PC-3 (cell line): ENCODE measurements at regions of chr14 and their contacts with region 1.

Region 1: GRCh38 chr14:77000340-77001270 is 27.9 kb downstream of the IRF2BPL start:
- DNase-seq: no peak
- ATAC-seq: peak; percentile 35
- H3K4me3 ChIP-seq: no peak overlapping the region
- H3K27ac ChIP-seq: no peak overlapping the region
- H3K4me1 ChIP-seq: peaks cover 34% of the 10 kb centered on the region
- H3K27me3 ChIP-seq: no peaks in the 10 kb centered on the region
- CTCF ChIP-seq: no peak

Region 2: GRCh38 chr14:76962303-76962660 is 38.3 kb before region 1 on chr14:
- CTCF ChIA-PET with region 1: no interaction called
- POLR2A ChIA-PET with region 1: no interaction called
- intact Hi-C with region 1: loop called (anchors 5 kb)
- DNase-seq: no peak
- ATAC-seq: peak; percentile 4
- H3K4me3 ChIP-seq: peak overlapping the region; percentile 59
- H3K27ac ChIP-seq: peak overlapping the region; percentile 86
- H3K4me1 ChIP-seq: peaks cover 49% of the 10 kb centered on the region
- H3K27me3 ChIP-seq: no peaks in the 10 kb centered on the region
- CTCF ChIP-seq: no peak

Region 3: GRCh38 chr14:77023001-77023996 is 22.7 kb after region 1 on chr14:
- CTCF ChIA-PET with region 1: no interaction called
- POLR2A ChIA-PET with region 1: no interaction called
- intact Hi-C with region 1: loop called (anchors 1 kb)
- DNase-seq: peak; percentile 61
- ATAC-seq: peak; percentile 10
- H3K4me3 ChIP-seq: peak overlapping the region; percentile 99
- H3K27ac ChIP-seq: peak overlapping the region; percentile 91
- H3K4me1 ChIP-seq: peaks cover 25% of the 10 kb centered on the region
- H3K27me3 ChIP-seq: no peaks in the 10 kb centered on the region
- CTCF ChIP-seq: peak; percentile 35; the same call in 1 of the 2 replicates

Region 4: GRCh38 chr14:77186911-77187648 is 186.5 kb after region 1 on chr14:
- CTCF ChIA-PET with region 1: no interaction called
- POLR2A ChIA-PET with region 1: no interaction called
- intact Hi-C with region 1: no loop called
- DNase-seq: peak; percentile 65
- ATAC-seq: peak; percentile 58
- H3K4me3 ChIP-seq: no peak overlapping the region
- H3K27ac ChIP-seq: no peak overlapping the region
- H3K4me1 ChIP-seq: peaks cover 18% of the 10 kb centered on the region
- H3K27me3 ChIP-seq: no peaks in the 10 kb centered on the region
- CTCF ChIP-seq: no peak

Region 5: GRCh38 chr14:77674931-77675330 is 674.3 kb after region 1 on chr14:
- CTCF ChIA-PET with region 1: no interaction called
- POLR2A ChIA-PET with region 1: no interaction called
- intact Hi-C with region 1: no loop called
- DNase-seq: no peak
- ATAC-seq: no peak
- H3K4me3 ChIP-seq: no peak overlapping the region
- H3K27ac ChIP-seq: no peak overlapping the region
- H3K4me1 ChIP-seq: no peaks in the 10 kb centered on the region
- H3K27me3 ChIP-seq: no peaks in the 10 kb centered on the region
- CTCF ChIP-seq: no peak